ENCODE measurements at regions of chr17 and their contacts with region 1.

Region 1: DNA sequence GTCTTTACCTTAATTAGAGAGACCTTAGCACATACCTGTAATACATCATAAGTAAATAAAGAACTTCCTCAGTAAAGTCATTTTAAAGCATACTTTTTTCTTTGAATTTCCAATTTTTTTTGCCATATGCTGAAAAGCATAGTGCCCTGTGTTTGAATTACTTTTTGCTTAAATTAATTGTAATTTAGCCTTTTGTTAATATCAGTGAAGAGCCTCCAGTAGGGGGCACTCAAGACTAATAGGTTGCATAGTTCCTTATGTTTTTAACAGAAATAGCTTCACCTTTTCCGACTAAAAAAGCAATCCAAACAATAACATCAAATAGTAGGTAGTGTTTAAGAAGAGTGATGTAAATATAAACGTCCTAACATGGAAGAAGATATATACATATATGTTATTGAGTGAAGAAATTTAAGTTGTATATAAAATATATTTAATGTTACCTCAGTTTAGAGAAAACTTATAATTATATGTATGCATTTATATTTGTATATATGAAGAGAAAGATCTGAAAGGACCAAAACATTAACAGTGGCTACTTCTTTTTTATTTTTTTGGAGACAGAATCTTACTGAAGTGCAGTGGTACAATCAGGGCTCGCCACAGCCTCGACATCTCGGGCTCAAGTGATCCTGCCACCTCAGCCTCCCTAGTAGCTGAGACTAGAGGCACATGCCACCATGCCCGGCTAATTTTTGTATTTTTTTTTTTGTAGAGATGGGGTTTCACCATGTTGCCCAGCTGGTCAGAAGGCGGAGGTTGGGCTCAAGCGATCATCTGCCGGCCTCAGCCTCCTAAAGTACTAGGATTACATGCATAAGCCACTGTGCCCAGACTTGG is 18.8 kb downstream of the RAD51C start:
- DNase-seq: peak; percentile 57
- ATAC-seq: no peak
- H3K4me3 Mint-ChIP-seq: no peak overlapping the region
- H3K27ac Mint-ChIP-seq: no peak overlapping the region
- H3K4me1 Mint-ChIP-seq: peaks cover 14% of the 10 kb centered on the region
- H3K27me3 Mint-ChIP-seq: no peaks in the 10 kb centered on the region

Region 2: GRCh38 chr17:58699766-58700165 is 11.4 kb before region 1 on chr17:
- CTCF ChIA-PET with region 1: interaction called, 13 read pairs
- POLR2A ChIA-PET with region 1: interaction called, 3 read pairs
- DNase-seq: no peak
- ATAC-seq: no peak
- H3K4me3 Mint-ChIP-seq: no peak overlapping the region
- H3K27ac Mint-ChIP-seq: no peak overlapping the region
- H3K4me1 Mint-ChIP-seq: peaks cover 12% of the 10 kb centered on the region
- H3K27me3 Mint-ChIP-seq: no peaks in the 10 kb centered on the region

Region 3: GRCh38 chr17:58786613-58787295 is 75.6 kb after region 1 on chr17:
- CTCF ChIA-PET with region 1: no interaction called
- POLR2A ChIA-PET with region 1: no interaction called
- DNase-seq: no peak
- ATAC-seq: no peak
- H3K4me3 Mint-ChIP-seq: no peak overlapping the region
- H3K27ac Mint-ChIP-seq: no peak overlapping the region
- H3K4me1 Mint-ChIP-seq: no peaks in the 10 kb centered on the region
- H3K27me3 Mint-ChIP-seq: peaks cover 5% of the 10 kb centered on the region

Measured in activated CD8-positive, alpha-beta T cell treated with anti-CD3 and anti-CD28 coated beads, Interleukin-2, amount 10 ng/mL, durations not matched to agents 7 days and 5 days (primary cell).